ENCODE measurements at regions of chr9 and their contacts with region 1.

Region 1: GRCh38 chr9:36584622-36585470 is 12.2 kb downstream of the MELK start:
- DNase-seq: peak; percentile 55 to 72
- H3K4me3 ChIP-seq: no peak overlapping the region
- H3K27ac ChIP-seq: peak overlapping the region; percentile 87
- H3K4me1 ChIP-seq: peaks cover 16% of the 10 kb centered on the region
- H3K27me3 ChIP-seq: no peaks in the 10 kb centered on the region
- CTCF ChIP-seq: no peak

Region 2: DNA sequence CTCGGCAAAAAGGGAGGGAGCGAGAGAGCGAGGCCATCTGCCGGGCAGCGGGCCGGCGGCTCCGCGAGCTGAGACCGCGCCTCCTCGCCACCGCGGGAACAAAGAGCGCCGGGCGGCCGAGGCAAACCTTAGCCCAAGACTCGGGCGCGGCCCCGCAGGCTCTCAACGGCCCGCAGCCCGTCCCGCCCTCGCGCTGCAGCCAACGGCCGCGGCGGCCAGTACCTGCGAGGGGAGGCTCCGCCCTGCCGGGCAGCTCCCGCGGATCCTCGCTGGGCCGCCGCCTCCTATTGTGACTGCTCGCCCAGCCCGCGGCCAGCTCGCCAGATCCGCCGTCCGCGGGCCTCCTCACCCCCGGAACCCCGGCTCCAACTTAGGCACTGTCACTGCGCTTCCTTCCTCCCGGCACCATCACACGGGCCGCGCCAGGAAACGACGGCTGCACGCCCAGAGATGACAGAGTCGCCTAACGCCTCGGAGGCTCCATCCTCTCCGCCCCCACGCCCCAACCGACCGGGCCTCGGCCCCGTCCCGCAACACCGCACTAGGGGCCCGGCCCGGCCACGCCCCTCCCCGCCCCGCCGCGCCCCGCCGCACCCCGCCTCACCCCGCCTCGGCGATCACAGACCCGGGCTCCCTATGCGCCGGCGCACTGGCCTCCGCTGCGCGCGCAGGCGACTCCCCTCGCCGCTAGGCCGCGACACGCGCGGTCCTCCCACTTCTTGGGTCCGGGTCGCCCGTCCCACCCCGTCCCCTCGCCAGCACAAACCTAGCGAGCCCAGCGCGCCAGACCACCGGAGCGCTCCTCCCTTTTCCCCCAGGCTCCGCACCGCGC is 184.3 kb before region 1 on chr9:
- CTCF ChIA-PET with region 1: no interaction called
- POLR2A ChIA-PET with region 1: no interaction called
- intact Hi-C with region 1: no loop called
- DNase-seq: peak; percentile 70 to 84
- H3K4me3 ChIP-seq: peak overlapping the region; percentile 73
- H3K27ac ChIP-seq: peak overlapping the region; percentile 84
- H3K4me1 ChIP-seq: peaks cover 29% of the 10 kb centered on the region
- H3K27me3 ChIP-seq: no peaks in the 10 kb centered on the region
- CTCF ChIP-seq: no peak

Region 3: GRCh38 chr9:36456480-36457065 is 128.3 kb before region 1 on chr9:
- CTCF ChIA-PET with region 1: no interaction called
- POLR2A ChIA-PET with region 1: interaction called, 16 read pairs
- intact Hi-C with region 1: no loop called
- DNase-seq: no peak
- H3K4me3 ChIP-seq: no peak overlapping the region
- H3K27ac ChIP-seq: no peak overlapping the region
- H3K4me1 ChIP-seq: no peaks in the 10 kb centered on the region
- H3K27me3 ChIP-seq: no peaks in the 10 kb centered on the region
- CTCF ChIP-seq: no peak

Region 4: DNA sequence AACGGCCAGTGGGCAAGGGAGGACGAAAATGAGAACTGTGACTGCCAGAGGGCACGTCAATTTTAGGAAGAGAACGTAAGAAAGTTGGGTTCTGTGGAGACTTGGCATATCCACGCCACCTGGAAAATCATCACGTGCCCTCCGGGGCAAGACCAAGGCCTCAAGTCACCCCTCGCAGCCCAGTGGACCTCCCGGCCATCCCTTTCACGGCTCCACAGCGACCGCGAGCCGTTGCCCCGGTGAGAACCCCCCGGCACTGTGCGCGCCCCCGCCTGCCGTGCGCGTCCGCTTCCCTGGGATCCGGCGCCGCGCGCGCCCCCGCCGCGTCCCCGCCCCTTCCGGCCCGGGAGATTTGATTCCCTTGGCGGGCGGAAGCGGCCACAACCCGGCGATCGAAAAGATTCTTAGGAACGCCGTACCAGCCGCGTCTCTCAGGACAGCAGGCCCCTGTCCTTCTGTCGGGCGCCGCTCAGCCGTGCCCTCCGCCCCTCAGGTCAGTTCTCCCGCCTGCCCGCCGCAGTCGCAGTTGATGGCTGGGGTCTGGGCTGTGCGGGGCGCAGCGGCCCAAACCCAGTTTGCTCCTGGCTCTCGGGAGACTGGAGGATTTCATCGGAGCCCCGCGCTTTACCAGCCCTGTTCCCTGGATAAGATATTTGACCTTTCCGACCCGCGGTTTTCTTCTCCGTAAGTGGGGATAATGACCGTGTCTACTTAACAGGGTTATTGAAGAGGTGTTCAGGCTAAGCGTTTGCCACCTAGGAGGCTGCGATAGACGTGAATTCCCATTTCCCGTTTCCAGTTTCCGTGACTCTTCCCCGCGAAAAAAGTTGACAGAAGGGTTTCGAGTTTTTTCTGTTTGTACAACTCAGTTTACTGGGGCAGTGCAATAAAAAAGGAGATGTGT is 12.1 kb before region 1 on chr9 and contains the start of gene MELK:
- CTCF ChIA-PET with region 1: interaction called, 21 read pairs
- POLR2A ChIA-PET with region 1: no interaction called
- intact Hi-C with region 1: no loop called
- DNase-seq: peak; percentile 41 to 79
- H3K4me3 ChIP-seq: peak within 1 kb of the TSS; percentile 98
- H3K27ac ChIP-seq: peak within 1 kb of the TSS; percentile 50
- H3K4me1 ChIP-seq: peaks cover 23% of the 10 kb centered on the region
- H3K27me3 ChIP-seq: no peaks in the 10 kb centered on the region
- CTCF ChIP-seq: no peak
- total RNA-seq, gene MELK: 25.1 and 48.1 TPM in 2 replicates

Region 5: GRCh38 chr9:36597412-36598178 is 12.7 kb after region 1 on chr9:
- CTCF ChIA-PET with region 1: no interaction called
- POLR2A ChIA-PET with region 1: interaction called, 20 read pairs
- intact Hi-C with region 1: no loop called
- DNase-seq: no peak
- H3K4me3 ChIP-seq: no peak overlapping the region
- H3K27ac ChIP-seq: no peak overlapping the region
- H3K4me1 ChIP-seq: no peaks in the 10 kb centered on the region
- H3K27me3 ChIP-seq: no peaks in the 10 kb centered on the region
- CTCF ChIP-seq: peak; percentile 66

Measured in PC-9 (cell line).